Body of pancreas (tissue), 4 donors: ENCODE measurements at regions of chr4 and their contacts with region 1.

Region 1: DNA sequence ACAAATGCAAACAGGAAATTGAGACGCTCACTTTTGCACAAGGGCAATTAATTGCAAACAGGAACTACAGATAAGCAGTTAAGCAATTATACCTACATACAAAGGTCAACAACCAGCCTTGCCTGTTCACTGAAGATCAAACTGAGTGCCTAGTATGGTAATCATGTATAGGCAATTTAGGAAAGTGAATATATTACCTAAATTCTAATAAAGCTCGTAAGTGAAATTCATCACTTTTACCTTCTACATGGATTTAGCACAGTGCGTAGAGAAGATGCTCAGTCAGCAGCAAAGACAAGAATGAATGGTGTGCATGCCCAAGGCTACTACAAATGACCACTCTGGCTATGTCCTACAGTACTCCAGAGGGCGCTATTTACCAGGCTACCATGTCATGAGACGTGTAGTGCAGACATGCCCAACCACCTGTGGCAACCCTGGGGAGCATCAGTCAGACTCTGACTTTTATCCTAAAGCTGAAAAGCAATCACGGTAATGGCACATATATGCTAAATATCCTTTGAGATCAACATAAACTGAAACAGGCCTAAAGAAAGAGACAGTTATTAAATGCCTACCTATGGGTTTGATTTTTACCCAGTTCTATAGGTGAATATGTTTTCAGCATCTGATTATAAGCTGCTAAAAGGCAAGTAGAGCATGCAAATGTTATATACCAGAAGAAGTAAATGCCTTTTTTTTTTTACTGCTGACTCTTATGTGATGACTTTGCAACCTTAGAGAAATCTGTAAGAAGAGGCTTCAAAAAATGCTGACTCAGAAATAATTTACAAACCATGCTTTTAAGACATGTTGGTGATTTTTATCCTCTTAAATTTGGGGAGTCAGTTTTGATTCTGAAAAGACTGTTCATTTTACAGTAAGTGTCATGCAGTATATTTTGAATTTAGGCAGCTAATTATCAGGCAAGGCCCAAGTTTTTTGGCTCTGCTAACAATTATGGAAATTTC is 178.0 kb downstream of the PPP3CA start:
- DNase-seq: peak; percentile 71 to 82 (median 75)
- ATAC-seq: peak; percentile 92
- H3K4me3 ChIP-seq: no peak overlapping the region
- H3K27ac ChIP-seq: no peak overlapping the region
- H3K4me1 ChIP-seq: no peaks in the 10 kb centered on the region
- H3K27me3 ChIP-seq: no peaks in the 10 kb centered on the region
- CTCF ChIP-seq: peak; percentile 49 to 88 (median 83)
- POLR2A ChIP-seq: no peak

Region 2: GRCh38 chr4:101527188-101527587 is 357.9 kb after region 1 on chr4:
- intact Hi-C with region 1: no loop called
- DNase-seq: no peak
- ATAC-seq: no peak
- H3K4me3 ChIP-seq: no peak overlapping the region
- H3K27ac ChIP-seq: no peak overlapping the region
- H3K4me1 ChIP-seq: no peaks in the 10 kb centered on the region
- H3K27me3 ChIP-seq: no peaks in the 10 kb centered on the region
- CTCF ChIP-seq: no peak
- POLR2A ChIP-seq: no peak

Region 3: GRCh38 chr4:101724093-101724492 is 554.8 kb after region 1 on chr4:
- intact Hi-C with region 1: loop called (anchors 10 kb)
- DNase-seq: no peak
- ATAC-seq: no peak
- H3K4me3 ChIP-seq: no peak overlapping the region
- H3K27ac ChIP-seq: no peak overlapping the region
- H3K4me1 ChIP-seq: no peaks in the 10 kb centered on the region
- H3K27me3 ChIP-seq: no peaks in the 10 kb centered on the region
- CTCF ChIP-seq: no peak
- POLR2A ChIP-seq: no peak